Activated CD4-positive, alpha-beta T cell treated with anti-CD3 and anti-CD28 coated beads, Interleukin-2, amount 10 ng/mL, durations not matched to agents 24 days and 14 days (primary cell): ENCODE measurements at regions of chr17 and their contacts with region 1.

Region 1: GRCh38 chr17:81927653-81928543 is at the start of gene MAFG:
- DNase-seq: peak; percentile 97
- H3K4me3 Mint-ChIP-seq: peak within 1 kb of the TSS; percentile 92
- H3K27ac Mint-ChIP-seq: peak within 1 kb of the TSS; percentile 90
- H3K4me1 Mint-ChIP-seq: peaks cover 28% of the 10 kb centered on the region
- H3K27me3 Mint-ChIP-seq: peaks cover 6% of the 10 kb centered on the region
- total RNA-seq, gene MAFG: 32.5 and 33.3 TPM in 2 replicates

Region 2: GRCh38 chr17:81833160-81833920 is 94.6 kb before region 1 on chr17 and contains the start of gene MCRIP1:
- intact Hi-C with region 1: loop called (anchors 2 kb)
- DNase-seq: peak; percentile 99
- H3K4me3 Mint-ChIP-seq: peak within 1 kb of the TSS; percentile 93
- H3K27ac Mint-ChIP-seq: peak within 1 kb of the TSS; percentile 94
- H3K4me1 Mint-ChIP-seq: peaks cover 19% of the 10 kb centered on the region
- H3K27me3 Mint-ChIP-seq: no peaks in the 10 kb centered on the region
- total RNA-seq, gene MCRIP1: 46.7 and 51.9 TPM in 2 replicates

Region 3: GRCh38 chr17:81871387-81872230 is 56.3 kb before region 1 on chr17:
- intact Hi-C with region 1: loop called (anchors 5 kb)
- DNase-seq: peak; percentile 99
- H3K4me3 Mint-ChIP-seq: peak overlapping the region; percentile 87
- H3K27ac Mint-ChIP-seq: peak overlapping the region; percentile 96
- H3K4me1 Mint-ChIP-seq: peaks cover 31% of the 10 kb centered on the region
- H3K27me3 Mint-ChIP-seq: no peaks in the 10 kb centered on the region

Region 4: GRCh38 chr17:81911277-81911961 is 16.5 kb before region 1 on chr17 and contains the start of gene PCYT2:
- intact Hi-C with region 1: loop called (anchors 2 kb)
- DNase-seq: peak; percentile 97
- H3K4me3 Mint-ChIP-seq: peak within 1 kb of the TSS; percentile 86
- H3K27ac Mint-ChIP-seq: peak within 1 kb of the TSS; percentile 62
- H3K4me1 Mint-ChIP-seq: peaks cover 13% of the 10 kb centered on the region
- H3K27me3 Mint-ChIP-seq: no peaks in the 10 kb centered on the region
- total RNA-seq, gene PCYT2: 43.0 and 46.5 TPM in 2 replicates

Region 5: DNA sequence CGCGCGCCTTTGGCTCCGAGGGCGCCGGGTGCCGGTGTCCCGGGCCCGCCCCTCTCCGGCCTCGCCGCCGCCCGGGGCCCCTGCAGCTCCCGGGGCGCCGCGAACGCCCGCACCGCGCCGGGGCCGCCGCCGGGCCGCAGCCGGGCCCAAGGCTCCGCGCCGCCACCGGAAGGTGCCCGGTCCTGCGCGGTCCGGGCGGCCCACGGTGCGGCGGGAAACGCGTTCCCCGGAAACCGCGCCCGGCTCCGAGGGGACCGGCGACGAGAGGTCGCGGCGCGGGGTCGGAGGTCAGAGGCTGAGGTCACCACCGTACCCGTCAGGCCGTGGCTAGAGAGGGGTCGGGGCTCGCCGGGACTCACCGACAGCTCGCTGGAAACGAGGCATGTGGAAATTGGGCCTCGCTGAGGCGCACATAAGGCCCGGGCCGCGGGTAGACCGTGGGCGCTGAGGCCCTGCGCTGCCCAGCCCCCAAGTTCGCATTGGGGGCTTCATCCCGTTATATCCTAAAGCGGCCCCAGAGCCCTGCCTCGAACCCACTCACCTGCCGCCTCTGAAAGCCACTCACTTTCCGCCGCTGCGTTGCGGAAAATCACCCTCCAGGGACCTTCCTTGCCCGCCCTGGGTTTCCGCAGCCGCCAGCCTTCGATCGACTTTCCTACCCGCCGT is 137.9 kb after region 1 on chr17 and contains the start of gene DUS1L:
- intact Hi-C with region 1: no loop called
- DNase-seq: peak; percentile 94
- H3K4me3 Mint-ChIP-seq: peak within 1 kb of the TSS; percentile 84
- H3K27ac Mint-ChIP-seq: peak within 1 kb of the TSS; percentile 89
- H3K4me1 Mint-ChIP-seq: peaks cover 4% of the 10 kb centered on the region
- H3K27me3 Mint-ChIP-seq: no peaks in the 10 kb centered on the region
- total RNA-seq, gene DUS1L: 230 and 232 TPM in 2 replicates